SK-N-SH (cell line): ENCODE measurements at regions of chr3 and their contacts with region 1.

Region 1: GRCh38 chr3:129052675-129053074 is 7.9 kb upstream of the GP9 start:
- DNase-seq: peak; percentile 47
- H3K4me3 ChIP-seq: no peak overlapping the region
- H3K27ac ChIP-seq: peak overlapping the region in 1 of 2 experiments; percentile 78; a peak in 2 of 4 replicates
- H3K4me1 ChIP-seq: peaks cover 0 to 14% of the 10 kb centered on the region in 2 experiments; a peak in 1 of 4 replicates
- H3K27me3 ChIP-seq: 0 out of 2 replicates have a peak, but pooled peaks cover 7% of the 10 kb centered on the region
- CTCF ChIP-seq: no peak
- EP300 ChIP-seq: no peak
- RAD21 ChIP-seq: no peak

Region 2: DNA sequence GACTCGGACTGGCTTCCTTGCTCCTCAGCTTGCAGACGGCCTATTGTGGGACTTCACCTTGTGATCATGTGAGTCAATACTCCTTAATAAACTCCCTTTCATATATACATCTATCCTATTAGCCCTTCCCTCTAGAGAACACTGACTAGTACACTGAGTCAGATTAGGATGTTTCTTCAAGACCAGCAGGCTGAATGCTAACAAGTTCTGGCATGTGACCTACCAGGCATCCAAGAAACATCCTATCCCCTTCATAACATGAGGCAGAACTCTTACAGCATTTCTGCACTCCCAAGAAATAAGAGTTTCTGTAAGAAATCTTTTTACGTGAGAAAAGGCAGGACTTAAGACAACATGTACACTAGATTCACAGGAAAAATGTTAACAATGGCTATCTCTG is 68.1 kb before region 1 on chr3:
- CTCF ChIA-PET with region 1: interaction called, 13 read pairs
- POLR2A ChIA-PET with region 1: no interaction called
- DNase-seq: no peak
- H3K4me3 ChIP-seq: no peak overlapping the region
- H3K27ac ChIP-seq: no peak overlapping the region
- H3K4me1 ChIP-seq: peaks cover 0 to 10% of the 10 kb centered on the region in 2 experiments; a peak in 1 of 4 replicates
- H3K27me3 ChIP-seq: no peaks in the 10 kb centered on the region; the same call in 1 of the 2 replicates
- CTCF ChIP-seq: no peak
- EP300 ChIP-seq: no peak
- RAD21 ChIP-seq: no peak

Region 3: GRCh38 chr3:129003578-129004160 is 49.0 kb before region 1 on chr3:
- CTCF ChIA-PET with region 1: interaction called, 22 read pairs
- POLR2A ChIA-PET with region 1: no interaction called
- DNase-seq: peak; percentile 80
- H3K4me3 ChIP-seq: peak overlapping the region in 1 of 2 experiments; percentile 27; a peak in 1 of 4 replicates
- H3K27ac ChIP-seq: no peak overlapping the region
- H3K4me1 ChIP-seq: peaks cover 0 to 2% of the 10 kb centered on the region in 2 experiments; a peak in 1 of 4 replicates
- H3K27me3 ChIP-seq: peaks cover 49% of the 10 kb centered on the region
- CTCF ChIP-seq: no peak
- EP300 ChIP-seq: no peak
- RAD21 ChIP-seq: peak; percentile 28; the same call in 1 of the 2 replicates

Region 4: DNA sequence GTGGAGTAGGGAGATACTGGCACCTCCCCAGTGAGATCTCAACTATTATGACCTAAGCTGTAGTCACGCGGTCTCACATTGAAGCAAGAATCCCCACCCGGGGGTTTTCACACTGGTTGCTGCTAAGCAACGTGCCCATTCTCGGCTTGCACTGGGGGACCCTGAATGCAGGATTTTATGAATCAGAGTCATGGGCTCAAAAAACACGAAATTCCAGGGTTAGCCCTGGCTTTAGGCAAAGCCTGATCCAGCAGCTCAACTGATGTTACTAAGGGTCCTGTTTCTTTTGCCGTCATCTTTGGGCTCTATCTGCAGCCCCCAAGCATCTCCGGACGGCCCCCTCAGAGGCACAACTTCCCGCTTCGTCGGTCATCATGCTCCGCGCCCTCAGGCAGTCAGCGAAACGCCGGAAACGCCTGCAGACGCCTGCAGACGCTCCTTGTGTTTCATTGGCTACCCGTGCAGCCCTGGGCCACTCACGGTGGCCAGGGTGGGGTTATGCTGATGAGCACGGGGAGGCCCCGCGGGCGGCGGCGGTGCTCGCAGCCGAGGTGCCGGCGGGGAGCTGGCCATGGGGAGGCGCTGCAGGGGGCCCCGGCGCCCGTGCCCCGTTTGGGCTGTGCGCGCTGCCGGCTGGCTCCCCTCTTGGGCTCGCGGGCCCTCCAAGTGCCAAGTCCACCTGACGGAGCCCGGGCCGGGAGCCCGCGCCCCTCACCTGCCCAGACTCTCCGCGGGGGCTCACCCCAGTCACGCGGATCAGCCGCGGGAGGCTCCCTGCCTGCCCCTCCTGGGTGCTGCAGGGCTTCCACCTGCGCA is 25.7 kb before region 1 on chr3:
- CTCF ChIA-PET with region 1: interaction called, 25 read pairs
- POLR2A ChIA-PET with region 1: no interaction called
- DNase-seq: peak; percentile 96
- H3K4me3 ChIP-seq: peak overlapping the region; percentile 37 to 59
- H3K27ac ChIP-seq: no peak overlapping the region
- H3K4me1 ChIP-seq: peaks cover 0 to 10% of the 10 kb centered on the region in 2 experiments; a peak in 1 of 4 replicates
- H3K27me3 ChIP-seq: no peaks in the 10 kb centered on the region; the same call in 1 of the 2 replicates
- CTCF ChIP-seq: peak; percentile 68
- EP300 ChIP-seq: no peak
- RAD21 ChIP-seq: no peak

Region 5: DNA sequence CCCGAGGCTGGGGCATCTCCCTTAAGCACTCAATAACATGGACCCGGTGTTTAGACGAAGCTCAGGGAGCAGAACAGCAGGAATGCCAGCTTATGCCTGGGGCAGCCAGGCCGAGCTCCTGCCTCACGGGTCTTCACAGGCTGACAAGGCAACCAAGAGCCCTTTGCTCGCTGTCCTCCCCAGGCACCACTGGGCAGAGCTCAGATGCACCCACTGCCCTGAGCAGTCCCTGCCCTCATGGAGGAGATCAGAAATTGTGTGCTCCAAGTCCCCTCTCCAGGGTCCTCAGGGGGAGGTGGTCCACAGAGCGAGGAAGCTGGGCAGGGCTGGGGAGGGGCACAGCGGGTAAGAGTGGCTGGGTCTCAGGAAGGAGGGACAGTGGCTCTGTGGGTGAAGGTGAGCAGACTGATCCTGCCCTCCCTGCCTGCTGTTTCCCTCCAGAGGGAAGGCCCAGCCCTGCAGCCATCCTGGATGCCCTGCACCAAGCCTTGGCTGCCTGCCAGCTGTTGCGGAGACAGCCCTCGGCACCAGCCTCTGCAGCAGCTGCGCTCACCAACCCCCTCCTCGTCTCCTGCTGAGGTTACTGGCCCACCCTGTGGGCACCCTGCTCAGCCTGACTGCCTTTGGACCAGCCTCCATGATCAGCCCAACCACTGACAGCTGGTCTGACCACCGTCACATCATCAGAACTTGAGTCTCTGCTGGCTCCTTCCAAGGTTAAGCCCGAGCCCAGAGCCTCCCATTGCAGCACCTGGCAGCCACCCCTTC is 13.2 kb before region 1 on chr3:
- CTCF ChIA-PET with region 1: interaction called, 64 read pairs
- POLR2A ChIA-PET with region 1: no interaction called
- DNase-seq: peak; percentile 88
- H3K4me3 ChIP-seq: no peak overlapping the region; a peak in 1 of 4 replicates
- H3K27ac ChIP-seq: peak overlapping the region in 1 of 2 experiments; percentile 43; a peak in 1 of 4 replicates
- H3K4me1 ChIP-seq: peaks cover 0 to 15% of the 10 kb centered on the region in 2 experiments; a peak in 1 of 4 replicates
- H3K27me3 ChIP-seq: peaks cover 5% of the 10 kb centered on the region; the same call in 1 of the 2 replicates
- CTCF ChIP-seq: no peak
- EP300 ChIP-seq: no peak
- RAD21 ChIP-seq: no peak

Region 6: GRCh38 chr3:129068291-129068886 is 15.7 kb after region 1 on chr3:
- CTCF ChIA-PET with region 1: interaction called, 24 read pairs
- POLR2A ChIA-PET with region 1: no interaction called
- DNase-seq: no peak
- H3K4me3 ChIP-seq: no peak overlapping the region
- H3K27ac ChIP-seq: no peak overlapping the region
- H3K4me1 ChIP-seq: no peaks in the 10 kb centered on the region; a peak in 1 of 4 replicates
- H3K27me3 ChIP-seq: no peaks in the 10 kb centered on the region; the same call in 1 of the 2 replicates
- CTCF ChIP-seq: no peak
- EP300 ChIP-seq: no peak
- RAD21 ChIP-seq: no peak

Region 7: GRCh38 chr3:129160891-129161859 is 108.5 kb after region 1 on chr3 and contains the start of gene ISY1:
- CTCF ChIA-PET with region 1: interaction called, 11 read pairs
- POLR2A ChIA-PET with region 1: no interaction called
- DNase-seq: peak; percentile 92
- H3K4me3 ChIP-seq: peak within 1 kb of the TSS; percentile 86 to 99
- H3K27ac ChIP-seq: peak within 1 kb of the TSS; percentile 99 to 100
- H3K4me1 ChIP-seq: peaks cover 0 to 15% of the 10 kb centered on the region in 2 experiments; a peak in 2 of 4 replicates
- H3K27me3 ChIP-seq: no peaks in the 10 kb centered on the region
- CTCF ChIP-seq: peak; percentile 81
- EP300 ChIP-seq: 0 out of 4 replicates have a peak, but pooled peaks of 1 of the 2 experiments have one; percentile 14
- RAD21 ChIP-seq: peak; percentile 44
- polyA plus RNA-seq, gene ISY1: 20.9 and 22.3 TPM in 2 replicates

Region 8: GRCh38 chr3:129211772-129212171 is 159.1 kb after region 1 on chr3:
- CTCF ChIA-PET with region 1: no interaction called
- POLR2A ChIA-PET with region 1: no interaction called
- DNase-seq: peak; percentile 53
- H3K4me3 ChIP-seq: no peak overlapping the region
- H3K27ac ChIP-seq: peak overlapping the region; percentile 2 to 47; a peak in 2 of 4 replicates
- H3K4me1 ChIP-seq: peaks cover 4 to 6% of the 10 kb centered on the region in 2 experiments; a peak in 2 of 4 replicates
- H3K27me3 ChIP-seq: no peaks in the 10 kb centered on the region
- CTCF ChIP-seq: no peak
- EP300 ChIP-seq: peak in 1 of 2 experiments; percentile 43; a peak in 1 of 4 replicates
- RAD21 ChIP-seq: no peak

Region 9: GRCh38 chr3:129777806-129778205 is 725.1 kb after region 1 on chr3:
- CTCF ChIA-PET with region 1: no interaction called
- POLR2A ChIA-PET with region 1: no interaction called
- DNase-seq: no peak
- H3K4me3 ChIP-seq: no peak overlapping the region
- H3K27ac ChIP-seq: no peak overlapping the region
- H3K4me1 ChIP-seq: no peaks in the 10 kb centered on the region
- H3K27me3 ChIP-seq: no peaks in the 10 kb centered on the region
- CTCF ChIP-seq: no peak
- EP300 ChIP-seq: no peak
- RAD21 ChIP-seq: no peak